Motor neuron (in vitro differentiated cells): ENCODE measurements at regions of chrX and their contacts with region 1.

Region 1: DNA sequence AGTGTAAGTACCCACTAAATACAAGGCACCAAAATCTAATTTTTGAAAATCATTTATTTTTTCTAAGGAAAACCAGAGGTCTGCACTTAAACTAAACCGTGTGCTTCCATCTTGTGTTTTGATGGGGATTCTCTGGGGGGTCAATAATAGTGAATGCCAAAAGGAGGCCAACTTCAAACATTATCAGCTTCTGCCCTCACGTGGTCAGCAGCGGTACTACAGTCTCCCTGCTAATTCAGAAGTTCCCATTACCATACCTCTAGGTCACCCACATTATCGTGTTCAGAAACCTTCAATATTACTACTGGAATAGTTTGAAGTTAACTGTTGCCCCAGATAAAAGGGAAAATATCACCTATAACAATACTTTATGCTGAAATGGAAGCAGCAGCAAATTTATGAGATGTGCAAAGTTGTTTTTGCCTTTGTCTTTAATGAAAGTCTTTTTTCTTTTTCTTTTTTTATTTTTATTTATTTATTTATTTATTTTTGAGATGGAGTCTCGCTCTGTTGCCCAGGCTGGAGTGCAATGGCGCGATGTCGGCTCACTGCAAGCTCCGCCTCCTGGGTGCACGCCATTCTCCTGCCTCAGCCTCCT is 17.3 kb downstream of the CTPS2 start:
- ATAC-seq: peak in 4 of 8 experiments; percentile 21 to 40 (median 36)
- H3K4me3 ChIP-seq: no peak overlapping the region
- H3K27ac ChIP-seq: no peak overlapping the region
- H3K4me1 ChIP-seq: no peaks in the 10 kb centered on the region

Region 2: DNA sequence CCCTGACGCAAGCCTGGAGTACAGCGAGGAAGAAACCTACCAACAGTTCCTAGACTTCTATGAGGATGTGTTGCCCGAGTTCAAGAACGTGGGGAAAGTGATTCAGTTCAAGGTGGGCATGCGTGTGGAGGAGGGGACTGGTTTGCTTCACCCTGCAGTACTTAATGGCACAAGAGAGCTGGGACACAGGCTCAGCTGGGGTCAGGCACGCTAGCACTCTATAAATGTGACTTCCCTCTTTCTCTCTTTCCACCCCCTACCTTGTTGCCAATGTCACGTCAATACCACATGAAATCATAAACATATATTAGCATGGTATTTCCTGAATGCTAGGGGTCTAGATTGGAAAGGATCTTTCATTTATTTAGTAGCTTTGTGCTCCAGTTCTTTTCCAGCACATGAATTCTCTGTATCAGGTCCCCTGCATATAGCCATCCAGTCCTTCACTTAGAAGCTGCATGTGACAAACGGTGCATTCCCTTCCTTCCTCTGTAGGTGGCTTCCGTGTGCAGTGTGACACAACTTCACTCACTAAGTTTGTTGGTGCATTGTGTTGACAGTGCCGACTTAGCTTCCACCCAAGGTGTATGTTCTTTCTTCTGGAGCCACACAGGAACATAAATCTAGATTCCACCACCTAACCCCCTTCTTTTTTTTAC is 879.3 kb before region 1 on chrX:
- in situ Hi-C with region 1: loop called in 1 of 9 experiments (anchors 25 kb)
- ATAC-seq: peak; percentile 62 to 89 (median 74)
- H3K4me3 ChIP-seq: no peak overlapping the region
- H3K27ac ChIP-seq: peak overlapping the region in 1 of 2 donors; percentile 77
- H3K4me1 ChIP-seq: peaks cover 7 to 11% of the 10 kb centered on the region in 2 donors

Region 3: DNA sequence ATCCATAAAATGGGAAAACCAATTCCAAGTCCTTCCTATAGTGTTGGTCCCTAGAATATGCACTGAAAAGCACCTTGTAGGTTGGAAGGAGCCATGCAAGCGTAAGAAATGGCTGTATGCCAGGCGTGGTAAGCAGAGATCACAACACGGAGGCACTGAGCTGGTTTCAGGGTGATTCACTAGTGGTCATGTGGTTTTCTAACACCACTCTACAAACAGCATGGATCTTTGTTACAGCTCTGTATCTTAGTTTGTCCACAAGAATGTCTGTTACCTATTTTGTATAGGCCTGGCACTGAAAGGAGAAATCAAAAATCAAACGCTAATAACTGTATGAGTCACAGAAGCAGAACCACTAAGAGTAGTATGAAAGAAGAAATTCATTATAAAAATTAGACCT is 456.0 kb before region 1 on chrX:
- in situ Hi-C with region 1: no loop called
- ATAC-seq: peak in 2 of 8 experiments; percentile 21 to 41
- H3K4me3 ChIP-seq: no peak overlapping the region
- H3K27ac ChIP-seq: no peak overlapping the region
- H3K4me1 ChIP-seq: no peaks in the 10 kb centered on the region

Region 4: GRCh38 chrX:16386126-16386525 is 309.1 kb before region 1 on chrX:
- in situ Hi-C with region 1: no loop called
- ATAC-seq: no peak
- H3K4me3 ChIP-seq: no peak overlapping the region
- H3K27ac ChIP-seq: no peak overlapping the region
- H3K4me1 ChIP-seq: no peaks in the 10 kb centered on the region